Heart left ventricle (tissue), 16 donors: ENCODE measurements at regions of chr11 and their contacts with region 1.

Region 1: GRCh38 chr11:36746886-36747710 is 149.1 kb upstream of the RAG2 start:
- DNase-seq: peak; percentile 73 to 85 (median 77)
- ATAC-seq: peak; percentile 86 to 99 (median 96)
- H3K4me3 ChIP-seq: no peak overlapping the region
- H3K27ac ChIP-seq: no peak overlapping the region
- H3K4me1 ChIP-seq: peaks cover 0 to 3% (median 0%) of the 10 kb centered on the region in 12 donors
- H3K27me3 ChIP-seq: peaks cover 0 to 16% (median 0%) of the 10 kb centered on the region in 9 donors
- CTCF ChIP-seq: peak; percentile 88 to 99 (median 96)
- POLR2A ChIP-seq: no peak

Region 2: DNA sequence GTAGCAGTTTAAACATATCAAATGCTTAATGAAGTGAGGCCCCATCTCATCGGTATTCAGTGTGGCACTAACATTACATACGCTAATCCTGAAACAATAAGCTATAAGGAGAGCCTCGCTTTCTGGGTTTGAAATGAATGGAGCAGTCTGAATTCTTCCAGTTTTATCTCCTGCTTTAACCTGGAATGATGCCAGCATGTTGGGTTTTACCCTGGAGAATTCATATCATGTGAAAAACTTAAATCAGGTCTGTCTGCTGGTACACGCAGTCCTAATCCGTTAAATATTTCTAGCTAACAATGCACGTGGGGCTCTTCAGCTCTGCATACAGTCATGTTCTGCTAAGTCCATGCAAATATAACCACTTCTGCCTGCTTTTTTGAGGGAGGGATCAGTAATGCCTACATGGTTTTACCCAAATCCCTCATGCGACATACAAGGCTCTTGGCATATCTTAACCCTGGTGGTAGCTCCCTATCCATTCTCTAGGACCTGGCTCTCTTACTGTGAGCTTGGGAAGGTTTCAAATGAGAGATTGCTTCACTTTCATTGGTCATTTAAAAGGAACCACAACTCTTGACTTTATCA is 550.6 kb before region 1 on chr11:
- intact Hi-C with region 1: no loop called
- DNase-seq: no peak
- ATAC-seq: peak; percentile 51 to 84 (median 65)
- H3K4me3 ChIP-seq: peak overlapping the region in 1 of 12 donors; percentile 24
- H3K27ac ChIP-seq: peak overlapping the region in 7 of 12 donors; percentile 14 to 55 (median 38)
- H3K4me1 ChIP-seq: peaks cover 0 to 21% (median 10%) of the 10 kb centered on the region in 12 donors
- H3K27me3 ChIP-seq: peaks cover 0 to 3% (median 0%) of the 10 kb centered on the region in 9 donors
- CTCF ChIP-seq: no peak
- POLR2A ChIP-seq: no peak

Region 3: GRCh38 chr11:36702330-36703055 is 44.6 kb before region 1 on chr11:
- intact Hi-C with region 1: loop called (anchors 1 to 5 kb)
- DNase-seq: peak in 1 of 5 donors; percentile 19
- ATAC-seq: peak; percentile 77 to 98 (median 92)
- H3K4me3 ChIP-seq: no peak overlapping the region
- H3K27ac ChIP-seq: peak overlapping the region in 3 of 12 donors; percentile 28 to 65 (median 30)
- H3K4me1 ChIP-seq: peaks cover 0 to 3% (median 0%) of the 10 kb centered on the region in 12 donors
- H3K27me3 ChIP-seq: no peaks in the 10 kb centered on the region
- CTCF ChIP-seq: peak; percentile 57 to 86 (median 76)
- POLR2A ChIP-seq: no peak

Region 4: GRCh38 chr11:36713715-36714114 is 33.4 kb before region 1 on chr11:
- intact Hi-C with region 1: no loop called
- DNase-seq: peak in 1 of 5 donors; percentile 28
- ATAC-seq: peak; percentile 54 to 81 (median 68)
- H3K4me3 ChIP-seq: no peak overlapping the region
- H3K27ac ChIP-seq: no peak overlapping the region
- H3K4me1 ChIP-seq: peaks cover 0 to 4% (median 0%) of the 10 kb centered on the region in 12 donors
- H3K27me3 ChIP-seq: peaks cover 0 to 6% (median 0%) of the 10 kb centered on the region in 9 donors
- CTCF ChIP-seq: no peak
- POLR2A ChIP-seq: no peak

Region 5: DNA sequence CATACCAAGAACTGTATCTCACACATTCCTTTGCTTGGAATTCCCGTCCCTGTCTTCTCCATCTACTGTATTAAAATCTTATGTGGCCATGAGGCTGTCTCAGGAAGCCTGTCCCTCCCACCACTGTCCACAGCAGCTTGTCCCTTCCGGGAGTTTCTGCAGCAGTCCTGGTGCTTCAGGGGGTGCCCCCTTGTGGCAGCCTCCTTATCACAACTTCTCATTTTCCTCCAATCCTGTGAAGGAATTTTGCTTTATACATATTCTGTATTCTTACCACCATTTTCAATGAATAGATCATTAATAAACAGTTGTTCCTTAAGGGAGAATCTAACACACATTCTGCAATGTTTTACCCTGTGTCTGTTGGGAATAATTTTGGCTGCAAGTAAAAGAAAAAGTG is 71.3 kb after region 1 on chr11:
- intact Hi-C with region 1: no loop called
- DNase-seq: no peak
- ATAC-seq: no peak
- H3K4me3 ChIP-seq: no peak overlapping the region
- H3K27ac ChIP-seq: no peak overlapping the region
- H3K4me1 ChIP-seq: no peaks in the 10 kb centered on the region
- H3K27me3 ChIP-seq: no peaks in the 10 kb centered on the region
- CTCF ChIP-seq: peak in 3 of 12 donors; percentile 22 to 30 (median 25)
- POLR2A ChIP-seq: no peak

Region 6: DNA sequence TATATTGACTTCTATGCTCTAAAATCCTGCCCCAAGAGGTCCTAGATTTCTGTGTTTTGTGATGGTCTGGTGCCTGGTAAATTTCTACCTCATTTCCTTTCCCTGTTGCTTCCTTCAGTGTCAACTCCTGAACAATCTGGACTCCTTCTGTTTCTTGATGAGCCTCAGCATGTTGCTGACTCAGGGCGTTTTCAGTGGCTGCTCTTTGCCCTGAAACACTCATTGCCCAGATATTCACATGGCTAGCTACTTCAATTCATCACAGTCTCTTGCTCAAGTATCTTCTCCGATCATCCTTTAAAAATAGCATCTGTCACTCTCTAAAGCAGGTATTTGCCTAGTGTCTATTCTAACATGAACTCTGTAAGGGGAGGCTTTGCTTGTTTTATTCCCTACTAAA is 377.3 kb after region 1 on chr11:
- intact Hi-C with region 1: no loop called
- DNase-seq: no peak
- ATAC-seq: no peak
- H3K4me3 ChIP-seq: no peak overlapping the region
- H3K27ac ChIP-seq: no peak overlapping the region
- H3K4me1 ChIP-seq: no peaks in the 10 kb centered on the region
- H3K27me3 ChIP-seq: no peaks in the 10 kb centered on the region
- CTCF ChIP-seq: no peak
- POLR2A ChIP-seq: no peak